Heart left ventricle (tissue), 16 donors: ENCODE measurements at regions of chr13 and their contacts with region 1.

Region 1: DNA sequence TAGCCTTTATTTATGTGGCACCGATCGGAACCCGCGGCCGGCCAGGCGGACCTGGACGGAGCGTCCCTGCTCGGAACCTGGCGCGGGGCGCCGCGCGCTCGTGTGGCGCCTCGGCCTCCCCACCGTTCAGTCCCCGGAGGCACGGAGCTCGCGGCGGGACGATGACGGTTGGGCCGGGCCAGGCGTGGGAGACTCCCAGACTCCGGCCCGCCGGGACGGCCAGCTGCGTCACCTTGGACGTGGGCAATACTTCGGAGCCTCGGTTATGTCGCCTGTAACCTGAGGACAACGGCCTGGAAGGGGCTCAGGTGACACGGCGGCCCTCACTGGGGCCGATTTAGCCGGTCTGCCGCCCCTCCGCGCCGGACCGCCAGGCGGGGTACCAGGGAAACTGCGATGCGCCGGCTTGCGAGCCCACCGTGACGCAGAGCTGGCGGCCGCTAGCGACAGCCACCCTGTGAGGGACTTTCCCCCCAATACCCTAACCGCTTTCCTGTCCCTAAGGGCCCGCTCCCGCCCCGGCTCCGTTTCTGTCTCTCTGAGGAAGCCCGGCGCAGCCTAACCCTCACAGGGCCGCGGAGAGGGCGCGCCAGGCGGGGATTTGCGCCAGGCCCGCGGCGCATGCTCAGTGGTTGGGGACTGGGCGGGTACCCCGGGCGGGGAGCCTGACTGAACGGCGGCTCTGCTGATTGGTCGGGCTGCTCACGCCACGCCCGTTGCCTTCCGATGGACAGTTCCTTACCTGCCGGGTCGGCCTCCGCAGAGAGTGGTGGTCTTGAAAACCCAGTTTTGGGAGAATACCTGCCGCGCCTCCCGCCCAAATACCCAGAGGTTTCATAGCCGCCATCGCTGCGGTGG is 109.5 kb upstream of the DOCK9 start:
- DNase-seq: peak; percentile 92 to 95 (median 92)
- ATAC-seq: peak; percentile 95 to 99 (median 98)
- H3K4me3 ChIP-seq: peak overlapping the region; percentile 72 to 93 (median 87)
- H3K27ac ChIP-seq: peak overlapping the region; percentile 78 to 97 (median 94)
- H3K4me1 ChIP-seq: peaks cover 0 to 36% (median 13%) of the 10 kb centered on the region in 12 donors
- H3K27me3 ChIP-seq: peaks cover 0 to 59% (median 0%) of the 10 kb centered on the region in 9 donors
- CTCF ChIP-seq: peak in 7 of 12 donors; percentile 16 to 50 (median 31)
- POLR2A ChIP-seq: peak; percentile 22 to 83

Region 2: GRCh38 chr13:99045396-99045795 is 41.9 kb before region 1 on chr13:
- intact Hi-C with region 1: loop called in 1 of 10 experiments (anchors 5 kb)
- DNase-seq: no peak
- ATAC-seq: no peak
- H3K4me3 ChIP-seq: no peak overlapping the region
- H3K27ac ChIP-seq: peak overlapping the region in 2 of 12 donors; percentile 54 to 80
- H3K4me1 ChIP-seq: peaks cover 0 to 50% (median 11%) of the 10 kb centered on the region in 12 donors
- H3K27me3 ChIP-seq: peaks cover 0 to 61% (median 0%) of the 10 kb centered on the region in 9 donors
- CTCF ChIP-seq: no peak
- POLR2A ChIP-seq: no peak